ENCODE measurements at regions of chr19 and their contacts with region 1.

Region 1: GRCh38 chr19:50922317-50922853 is 11.2 kb upstream of the KLK4 start:
- DNase-seq: peak; percentile 80 to 86
- H3K4me3 ChIP-seq: no peak overlapping the region
- H3K4me3 Mint-ChIP-seq: no peak overlapping the region
- H3K27ac Mint-ChIP-seq: no peak overlapping the region
- H3K4me1 ChIP-seq: no peaks in the 10 kb centered on the region
- H3K4me1 Mint-ChIP-seq: no peaks in the 10 kb centered on the region
- H3K27me3 ChIP-seq: no peaks in the 10 kb centered on the region; the same call in 1 of the 2 replicates
- H3K27me3 Mint-ChIP-seq: peaks cover 17% of the 10 kb centered on the region
- CTCF ChIP-seq: peak; percentile 86 to 93

Region 2: DNA sequence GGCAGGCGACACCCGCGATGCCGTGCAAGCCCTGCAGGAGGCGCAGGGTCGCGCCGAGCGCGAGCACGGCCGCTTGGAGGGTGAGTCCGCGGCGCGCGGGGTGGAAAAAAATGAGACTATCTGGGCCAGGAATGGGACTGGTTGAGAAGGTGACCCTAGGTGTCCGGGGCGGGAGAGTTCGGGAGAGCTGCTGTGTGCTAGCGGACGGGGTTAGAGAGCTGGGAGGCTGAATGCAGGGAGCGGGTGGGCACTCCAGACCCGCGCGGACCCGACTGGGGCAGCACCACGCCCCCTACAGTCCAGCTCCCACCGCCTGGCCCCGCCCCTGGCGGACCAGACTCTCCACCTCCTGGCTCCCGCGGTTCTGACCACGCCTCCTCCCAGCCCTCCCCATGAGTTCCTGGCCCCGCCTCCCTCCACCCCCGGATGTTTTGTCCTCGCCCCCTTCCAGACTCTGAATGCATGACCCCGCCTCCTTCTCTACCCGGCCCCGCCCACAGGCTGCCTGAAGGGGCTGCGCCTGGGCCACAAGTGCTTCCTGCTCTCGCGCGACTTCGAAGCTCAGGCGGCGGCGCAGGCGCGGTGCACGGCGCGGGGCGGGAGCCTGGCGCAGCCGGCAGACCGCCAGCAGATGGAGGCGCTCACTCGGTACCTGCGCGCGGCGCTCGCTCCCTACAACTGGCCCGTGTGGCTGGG is 197.7 kb before region 1 on chr19:
- CTCF ChIA-PET with region 1: interaction called, 20 read pairs
- POLR2A ChIA-PET with region 1: no interaction called
- intact Hi-C with region 1: loop called (anchors 5 kb)
- DNase-seq: peak; percentile 95 to 97
- H3K4me3 ChIP-seq: peak overlapping the region; percentile 68
- H3K4me3 Mint-ChIP-seq: peak overlapping the region; percentile 76
- H3K27ac Mint-ChIP-seq: peak overlapping the region; percentile 61
- H3K4me1 ChIP-seq: no peaks in the 10 kb centered on the region
- H3K4me1 Mint-ChIP-seq: peaks cover 10% of the 10 kb centered on the region
- H3K27me3 ChIP-seq: no peaks in the 10 kb centered on the region
- H3K27me3 Mint-ChIP-seq: peaks cover 20% of the 10 kb centered on the region
- CTCF ChIP-seq: peak; percentile 52 to 78